ENCODE measurements at regions of chr2 and their contacts with region 1.

Region 1: GRCh38 chr2:9548506-9548905 is 7.1 kb downstream of the ADAM17 start:
- DNase-seq: no peak
- H3K4me3 ChIP-seq: no peak overlapping the region
- H3K27ac ChIP-seq: no peak overlapping the region
- H3K4me1 ChIP-seq: peaks cover 0 to 45% (median 32%) of the 10 kb centered on the region in 4 donors
- H3K27me3 ChIP-seq: no peaks in the 10 kb centered on the region
- CTCF ChIP-seq: no peak
- EP300 ChIP-seq: no peak
- POLR2A ChIP-seq: no peak

Region 2: GRCh38 chr2:9205963-9206948 is 342.2 kb before region 1 on chr2 and contains the start of gene ASAP2:
- intact Hi-C with region 1: no loop called
- DNase-seq: peak; percentile 89
- H3K4me3 ChIP-seq: peak within 1 kb of the TSS; percentile 72 to 95 (median 82)
- H3K27ac ChIP-seq: peak within 1 kb of the TSS; percentile 84 to 95 (median 90)
- H3K4me1 ChIP-seq: peaks cover 0 to 40% (median 22%) of the 10 kb centered on the region in 4 donors
- H3K27me3 ChIP-seq: no peaks in the 10 kb centered on the region
- CTCF ChIP-seq: peak; percentile 51 to 84 (median 70)
- EP300 ChIP-seq: no peak
- POLR2A ChIP-seq: no peak
- total RNA-seq, gene ASAP2: 22.1 to 56.5 (median 26.5) TPM

Region 3: DNA sequence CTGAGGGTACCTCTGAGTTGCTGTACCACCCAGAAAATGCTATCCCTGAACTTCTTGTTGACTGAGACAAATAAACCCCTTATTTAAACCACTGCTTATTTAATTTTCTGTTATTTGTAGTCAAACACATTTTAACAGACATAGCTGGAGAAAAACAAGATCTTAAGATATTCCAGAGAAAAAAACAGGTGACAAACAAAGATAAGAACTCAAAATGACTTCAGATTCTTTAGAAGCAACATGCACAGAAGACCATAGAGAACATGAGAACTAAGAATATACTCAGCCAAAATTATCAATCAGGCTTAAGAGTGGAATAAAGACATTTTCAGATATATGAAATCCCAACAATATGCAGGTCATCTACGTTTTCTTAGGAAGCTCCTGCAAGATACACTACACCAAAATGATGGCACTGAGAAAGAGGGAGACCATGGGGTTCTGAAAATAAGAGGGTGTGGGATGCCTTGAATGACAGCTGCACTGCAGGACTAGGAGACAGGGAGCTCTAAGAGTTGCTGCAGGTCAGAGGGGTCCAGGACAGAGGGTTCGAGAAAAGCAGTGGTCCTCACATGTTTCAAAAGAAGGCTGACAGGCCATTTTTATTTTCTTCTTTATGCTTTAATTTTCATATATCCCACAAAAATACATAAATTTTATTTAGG is 31.3 kb before region 1 on chr2:
- intact Hi-C with region 1: no loop called
- DNase-seq: no peak
- H3K4me3 ChIP-seq: no peak overlapping the region
- H3K27ac ChIP-seq: no peak overlapping the region
- H3K4me1 ChIP-seq: no peaks in the 10 kb centered on the region
- H3K27me3 ChIP-seq: no peaks in the 10 kb centered on the region
- CTCF ChIP-seq: no peak
- EP300 ChIP-seq: no peak
- POLR2A ChIP-seq: no peak

Region 4: GRCh38 chr2:9527936-9528787 is 20.3 kb before region 1 on chr2:
- intact Hi-C with region 1: loop called (anchors 2 kb)
- DNase-seq: no peak
- H3K4me3 ChIP-seq: no peak overlapping the region
- H3K27ac ChIP-seq: no peak overlapping the region
- H3K4me1 ChIP-seq: no peaks in the 10 kb centered on the region
- H3K27me3 ChIP-seq: no peaks in the 10 kb centered on the region
- CTCF ChIP-seq: no peak
- EP300 ChIP-seq: no peak
- POLR2A ChIP-seq: no peak

Measured in sigmoid colon (tissue), 7 donors.